Endothelial cell of umbilical vein (primary cell): ENCODE measurements at regions of chr12 and their contacts with region 1.

Region 1: GRCh38 chr12:28172434-28173030 is 17.7 kb upstream of the CCDC91 start:
- DNase-seq: peak; percentile 73
- H3K4me3 ChIP-seq: no peak overlapping the region
- H3K27ac ChIP-seq: no peak overlapping the region
- H3K4me1 ChIP-seq: no peaks in the 10 kb centered on the region
- H3K27me3 ChIP-seq: no peaks in the 10 kb centered on the region
- CTCF ChIP-seq: peak; percentile 56 to 62
- POLR2A ChIP-seq: no peak

Region 2: DNA sequence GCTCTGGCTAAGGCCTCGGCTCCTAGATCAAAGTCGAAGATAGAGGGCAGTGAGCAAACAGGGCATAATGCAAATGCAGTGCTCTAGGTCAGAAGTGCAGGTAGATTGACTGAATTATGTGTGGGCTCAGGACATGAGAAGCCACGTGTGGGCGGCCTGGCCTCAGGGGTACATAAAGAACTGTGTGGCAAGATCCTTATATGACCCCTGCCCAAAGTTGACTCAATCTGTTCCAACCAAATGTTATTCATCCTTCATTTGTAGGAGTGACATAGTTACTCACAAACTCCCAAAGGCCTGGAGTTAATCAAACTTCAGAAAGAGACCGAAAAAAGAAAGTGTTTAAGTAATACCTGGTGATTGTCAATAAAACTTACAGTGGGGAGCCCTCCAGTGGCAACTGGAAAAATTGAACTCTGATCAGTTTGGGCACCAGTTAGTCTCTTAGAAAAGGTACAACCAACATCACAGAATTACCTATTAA is 826.1 kb after region 1 on chr12:
- CTCF ChIA-PET with region 1: interaction called, 4 read pairs
- POLR2A ChIA-PET with region 1: no interaction called
- dilution Hi-C with region 1: no loop called
- intact Hi-C with region 1: loop called (anchors 1 kb)
- DNase-seq: peak; percentile 56
- H3K4me3 ChIP-seq: no peak overlapping the region
- H3K27ac ChIP-seq: no peak overlapping the region
- H3K4me1 ChIP-seq: no peaks in the 10 kb centered on the region
- H3K27me3 ChIP-seq: no peaks in the 10 kb centered on the region
- CTCF ChIP-seq: peak; percentile 37 to 53
- POLR2A ChIP-seq: no peak